ENCODE measurements at regions of chr6 and their contacts with region 1.

Region 1: DNA sequence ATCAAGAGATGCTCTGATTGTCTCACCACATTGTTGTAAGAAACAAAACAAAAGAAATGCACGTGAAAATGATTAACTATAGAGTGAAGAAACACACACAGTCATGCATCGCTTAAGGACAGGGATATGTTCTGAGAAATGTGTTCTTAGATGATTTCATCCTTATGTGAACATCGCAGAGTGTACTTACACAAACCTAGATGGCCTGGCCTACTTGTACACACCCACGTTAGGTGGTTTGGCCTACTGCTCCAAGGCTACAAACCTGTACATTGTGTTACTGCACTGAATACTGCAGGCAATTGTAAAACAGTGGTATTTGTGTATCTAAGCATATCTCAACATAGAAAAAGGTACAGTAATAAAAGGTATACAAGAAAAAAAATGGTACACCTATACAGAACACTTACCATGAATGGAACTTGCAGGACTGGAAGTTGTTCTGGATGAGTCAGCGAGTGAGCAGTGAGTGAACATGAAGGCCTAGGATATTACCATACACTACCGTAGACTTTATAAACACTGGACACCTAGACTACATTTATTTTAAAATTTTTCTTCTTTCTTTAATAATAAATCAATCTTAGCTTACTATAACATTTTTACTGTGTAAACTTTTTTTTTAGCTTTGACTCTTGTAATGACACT is 48.6 kb downstream of the FKBP5 start:
- DNase-seq: no peak
- H3K4me3 Mint-ChIP-seq: no peak overlapping the region
- H3K27ac Mint-ChIP-seq: peak overlapping the region; percentile 19
- H3K4me1 Mint-ChIP-seq: peaks cover 37% of the 10 kb centered on the region
- H3K27me3 Mint-ChIP-seq: no peaks in the 10 kb centered on the region
- CTCF ChIP-seq: no peak

Region 2: GRCh38 chr6:35678021-35678654 is 38.0 kb after region 1 on chr6:
- CTCF ChIA-PET with region 1: interaction called, 4 read pairs
- POLR2A ChIA-PET with region 1: interaction called, 10 read pairs
- intact Hi-C with region 1: no loop called
- DNase-seq: no peak
- H3K4me3 Mint-ChIP-seq: peak overlapping the region; percentile 52
- H3K27ac Mint-ChIP-seq: peak overlapping the region; percentile 5
- H3K4me1 Mint-ChIP-seq: peaks cover 58% of the 10 kb centered on the region
- H3K27me3 Mint-ChIP-seq: no peaks in the 10 kb centered on the region
- CTCF ChIP-seq: no peak

Measured in MCF 10A (cell line).